K562 (cell line): ENCODE measurements at regions of chr5 and their contacts with region 1.

Region 1: DNA sequence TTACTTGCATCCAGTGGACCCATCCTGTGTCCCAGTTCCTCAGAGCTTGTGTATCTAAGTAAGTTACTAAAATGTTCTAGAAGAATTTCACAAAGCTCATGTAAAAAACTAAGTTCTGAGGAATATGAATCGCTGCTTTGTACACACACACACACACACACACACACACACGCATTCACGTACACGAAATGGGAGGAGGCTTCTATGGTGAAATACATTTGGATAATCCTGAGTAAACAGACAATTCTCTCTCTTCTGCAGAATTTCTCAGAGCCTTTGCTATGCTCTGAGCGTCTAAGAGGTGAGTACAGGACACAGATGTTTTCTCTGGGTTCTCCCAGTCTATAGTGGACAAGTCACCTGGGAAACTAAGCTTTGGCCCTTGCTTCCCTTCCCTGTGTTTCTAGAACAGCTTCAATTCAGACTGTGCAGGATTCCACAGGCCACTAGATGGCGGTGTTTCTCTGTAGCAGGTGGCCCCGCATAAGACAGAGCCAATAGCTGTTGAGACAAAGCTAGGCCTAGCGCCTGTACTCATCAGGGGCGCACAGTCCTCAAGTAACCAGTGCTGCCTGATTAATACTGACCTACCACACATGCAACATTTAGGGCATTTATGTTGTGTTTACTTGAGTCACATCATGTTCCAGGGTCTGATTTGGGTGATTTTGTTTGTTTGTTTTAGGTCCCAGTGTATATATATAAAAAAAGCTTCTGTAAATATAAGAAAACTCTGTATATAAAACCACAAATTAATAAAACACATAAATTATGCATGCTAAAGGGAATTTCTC is 114.8 kb downstream of the LIFR start:
- DNase-seq: peak; percentile 87 to 92 (median 88)
- ATAC-seq: peak; percentile 100
- H3K4me3 ChIP-seq: no peak overlapping the region
- H3K27ac ChIP-seq: no peak overlapping the region
- H3K4me1 ChIP-seq: peaks cover 0 to 6% of the 10 kb centered on the region in 2 experiments; a peak in 1 of 5 replicates
- H3K27me3 ChIP-seq: peaks cover 9 to 35% of the 10 kb centered on the region in 2 experiments; a peak in 4 of 5 replicates
- CTCF ChIP-seq: peak; percentile 96 to 98 (median 98)
- EP300 ChIP-seq: no peak
- POLR2A ChIP-seq: no peak
- RAD21 ChIP-seq: peak; percentile 98 to 99

Region 2: DNA sequence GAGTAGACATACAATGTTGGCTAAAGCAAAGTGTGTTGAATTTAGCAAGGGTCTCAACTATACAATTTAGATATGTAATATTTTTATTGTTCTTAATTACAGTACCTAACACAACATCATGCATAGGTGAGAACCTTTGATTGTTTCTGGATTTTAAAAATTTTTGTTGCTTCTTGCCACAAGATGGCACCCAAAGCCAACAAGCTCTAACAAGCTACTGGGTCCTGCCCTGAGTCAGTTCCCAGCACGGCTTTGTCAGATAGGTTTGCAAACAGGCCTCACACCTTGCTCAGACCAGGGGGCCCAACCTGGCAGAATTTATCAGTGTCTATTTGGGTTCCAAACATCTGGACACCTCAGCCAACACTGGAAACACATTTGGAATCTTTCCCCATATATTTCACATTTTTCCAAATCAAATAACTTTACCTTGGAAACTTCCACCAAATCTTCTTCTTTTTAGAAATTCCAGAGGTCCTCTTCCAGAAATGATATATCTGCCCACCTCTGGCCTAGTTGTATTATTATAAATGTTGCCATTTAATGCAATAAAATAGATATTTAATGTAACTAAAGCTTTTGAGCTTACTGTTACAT is 232.8 kb before region 1 on chr5:
- CTCF ChIA-PET with region 1: no interaction called
- POLR2A ChIA-PET with region 1: no interaction called
- in situ Hi-C with region 1: no loop called
- intact Hi-C with region 1: loop called (anchors 2 kb)
- DNase-seq: peak; percentile 34 to 69 (median 41)
- ATAC-seq: peak; percentile 86
- H3K4me3 ChIP-seq: no peak overlapping the region
- H3K27ac ChIP-seq: no peak overlapping the region
- H3K4me1 ChIP-seq: no peaks in the 10 kb centered on the region
- H3K27me3 ChIP-seq: no peaks in the 10 kb centered on the region
- CTCF ChIP-seq: peak; percentile 64 to 83 (median 70)
- EP300 ChIP-seq: no peak
- POLR2A ChIP-seq: no peak
- RAD21 ChIP-seq: peak; percentile 72 to 81

Region 3: GRCh38 chr5:38382898-38383297 is 58.8 kb before region 1 on chr5:
- CTCF ChIA-PET with region 1: no interaction called
- POLR2A ChIA-PET with region 1: no interaction called
- in situ Hi-C with region 1: no loop called
- intact Hi-C with region 1: loop called (anchors 2 kb)
- DNase-seq: peak; percentile 79 to 88 (median 85)
- ATAC-seq: peak; percentile 94
- H3K4me3 ChIP-seq: no peak overlapping the region
- H3K27ac ChIP-seq: no peak overlapping the region
- H3K4me1 ChIP-seq: peaks cover 10 to 26% of the 10 kb centered on the region in 2 experiments
- H3K27me3 ChIP-seq: no peaks in the 10 kb centered on the region
- CTCF ChIP-seq: peak; percentile 82 to 96 (median 87)
- EP300 ChIP-seq: peak; percentile 52; the same call in 1 of the 2 replicates
- POLR2A ChIP-seq: no peak
- RAD21 ChIP-seq: peak; percentile 57 to 83

Region 4: DNA sequence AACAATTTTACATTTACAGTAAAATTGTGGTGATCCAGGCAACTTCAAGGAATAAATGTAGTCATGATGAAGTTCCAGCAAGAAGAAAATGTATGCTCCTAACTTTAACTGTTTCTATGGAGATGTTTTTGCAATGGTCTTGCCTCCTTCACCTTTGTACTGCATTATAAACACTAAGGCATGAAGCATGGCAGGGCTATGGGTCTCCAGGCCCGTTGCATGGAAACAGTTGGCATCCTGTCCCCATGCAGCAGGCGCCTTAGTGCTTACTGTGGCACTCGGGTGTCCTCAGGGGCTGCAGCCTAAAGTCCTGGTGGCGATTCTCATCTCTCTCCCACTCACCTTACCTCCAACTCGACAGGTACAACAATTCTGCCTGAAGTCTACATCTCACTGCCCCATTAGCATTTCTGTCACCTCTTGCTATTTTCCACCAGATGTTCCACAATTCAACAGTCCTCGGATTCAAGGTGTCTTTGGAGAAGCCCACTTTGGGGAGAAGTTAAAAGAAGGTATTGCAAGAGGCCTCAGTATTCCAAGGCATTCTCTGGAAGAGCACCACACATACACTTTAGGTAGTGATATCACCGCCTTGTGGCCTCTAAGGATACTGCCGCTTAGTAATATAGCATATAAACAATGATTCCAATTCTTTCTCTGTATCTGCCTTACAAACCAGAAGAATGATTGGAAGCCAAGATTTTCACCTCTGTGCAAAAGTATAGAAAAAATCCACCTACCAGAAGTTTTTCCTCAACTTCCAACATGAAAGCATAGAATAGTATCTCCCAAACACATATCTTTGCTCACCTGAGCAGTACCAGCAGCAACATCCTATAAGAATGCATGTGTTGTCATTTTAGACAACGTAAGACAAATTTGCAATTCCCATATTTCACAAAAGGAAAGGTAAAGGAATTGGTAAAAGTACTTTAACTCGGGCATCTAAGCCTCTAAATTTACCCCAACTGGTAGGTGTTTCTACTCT is 109.7 kb after region 1 on chr5:
- CTCF ChIA-PET with region 1: interaction called, 5 read pairs
- POLR2A ChIA-PET with region 1: no interaction called
- in situ Hi-C with region 1: no loop called
- intact Hi-C with region 1: loop called (anchors 2 kb)
- DNase-seq: peak; percentile 17 to 37 (median 22)
- ATAC-seq: peak; percentile 79
- H3K4me3 ChIP-seq: no peak overlapping the region
- H3K27ac ChIP-seq: no peak overlapping the region
- H3K4me1 ChIP-seq: peaks cover 0 to 6% of the 10 kb centered on the region in 2 experiments; a peak in 3 of 5 replicates
- H3K27me3 ChIP-seq: peaks cover 0 to 5% of the 10 kb centered on the region in 2 experiments; a peak in 2 of 5 replicates
- CTCF ChIP-seq: peak; percentile 65 to 68 (median 68)
- EP300 ChIP-seq: no peak
- POLR2A ChIP-seq: no peak
- RAD21 ChIP-seq: peak; percentile 49 to 69

Region 5: GRCh38 chr5:38666668-38667498 is 225.2 kb after region 1 on chr5:
- CTCF ChIA-PET with region 1: interaction called, 14 read pairs
- POLR2A ChIA-PET with region 1: interaction called, 5 read pairs
- in situ Hi-C with region 1: loop called (anchors 5 kb)
- intact Hi-C with region 1: loop called (anchors 1 kb)
- DNase-seq: peak; percentile 57 to 64 (median 58)
- ATAC-seq: peak; percentile 97
- H3K4me3 ChIP-seq: no peak overlapping the region
- H3K27ac ChIP-seq: no peak overlapping the region
- H3K4me1 ChIP-seq: no peaks in the 10 kb centered on the region
- H3K27me3 ChIP-seq: 0 out of 5 replicates have a peak, but pooled peaks cover 0 to 6% of the 10 kb centered on the region in 2 experiments
- CTCF ChIP-seq: peak; percentile 79 to 82 (median 80)
- EP300 ChIP-seq: no peak
- POLR2A ChIP-seq: no peak
- RAD21 ChIP-seq: peak; percentile 86 to 89